Uterus (tissue), 4 donors: ENCODE measurements at regions of chr18 and their contacts with region 1.

Region 1: GRCh38 chr18:79395761-79396387 is at the start of gene NFATC1:
- DNase-seq: peak; percentile 89 to 91
- H3K4me3 ChIP-seq: peak within 1 kb of the TSS; percentile 32 to 67
- H3K27ac ChIP-seq: peak within 1 kb of the TSS; percentile 91 to 95
- H3K4me1 ChIP-seq: peaks cover 5 to 17% of the 10 kb centered on the region in 2 donors
- H3K27me3 ChIP-seq: no peaks in the 10 kb centered on the region
- CTCF ChIP-seq: no peak
- POLR2A ChIP-seq: peak; percentile 38 to 77
- total RNA-seq, gene NFATC1: 9.2 to 25.1 (median 14.6) TPM

Region 2: GRCh38 chr18:79300413-79300812 is 95.5 kb before region 1 on chr18:
- intact Hi-C with region 1: no loop called
- DNase-seq: no peak
- H3K4me3 ChIP-seq: no peak overlapping the region
- H3K27ac ChIP-seq: no peak overlapping the region
- H3K4me1 ChIP-seq: no peaks in the 10 kb centered on the region
- H3K27me3 ChIP-seq: no peaks in the 10 kb centered on the region
- CTCF ChIP-seq: no peak
- POLR2A ChIP-seq: no peak

Region 3: GRCh38 chr18:79458131-79458838 is 62.4 kb after region 1 on chr18:
- intact Hi-C with region 1: loop called (anchors 5 kb)
- DNase-seq: peak; percentile 82 to 84
- H3K4me3 ChIP-seq: peak overlapping the region in 1 of 2 donors; percentile 10
- H3K27ac ChIP-seq: peak overlapping the region; percentile 60 to 76
- H3K4me1 ChIP-seq: peaks cover 0 to 3% of the 10 kb centered on the region in 2 donors
- H3K27me3 ChIP-seq: no peaks in the 10 kb centered on the region
- CTCF ChIP-seq: no peak
- POLR2A ChIP-seq: no peak